ENCODE measurements at regions of chr2 and their contacts with region 1.

Region 1: DNA sequence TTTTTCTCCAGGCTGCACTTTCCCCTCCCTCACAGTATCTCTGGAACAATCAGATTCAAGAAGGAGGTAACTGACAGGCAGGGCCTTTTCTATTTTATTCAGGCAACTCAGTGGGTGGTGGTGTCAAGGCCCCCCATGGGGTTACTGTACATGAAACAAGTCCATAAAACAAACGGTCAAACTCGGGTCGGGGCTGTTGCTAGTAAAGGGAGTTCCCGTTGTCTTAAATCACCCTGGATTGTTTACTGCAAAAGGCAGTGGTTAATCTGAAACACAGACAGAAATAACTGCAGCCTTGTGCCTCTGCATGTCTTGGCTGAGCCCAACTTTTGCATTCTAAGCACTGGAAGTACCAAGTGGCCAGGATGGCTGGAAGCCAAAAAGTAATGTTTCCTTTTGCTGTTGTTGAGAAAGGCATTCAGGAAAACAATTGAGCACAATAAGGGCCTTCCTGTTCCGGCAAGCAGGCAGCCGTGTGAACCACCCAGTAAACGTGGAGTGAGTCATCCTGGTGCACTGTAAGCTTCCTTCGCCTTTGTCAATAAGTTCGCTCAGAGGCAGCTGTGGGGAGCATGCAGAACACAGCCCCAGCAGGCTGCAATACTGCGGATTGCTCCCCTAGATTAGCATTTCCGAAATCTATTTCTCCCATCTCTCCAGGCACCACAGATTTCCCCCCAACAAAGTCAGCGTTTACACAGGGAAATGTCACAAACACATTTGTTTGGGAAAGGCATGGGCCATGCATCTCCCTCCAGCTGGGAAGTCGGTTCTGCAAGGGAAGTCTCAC is 149.6 kb downstream of the IRS1 start:
- DNase-seq: peak; percentile 18 to 91
- H3K4me3 ChIP-seq: no peak overlapping the region
- H3K27ac ChIP-seq: peak overlapping the region; percentile 67 to 82
- H3K4me1 ChIP-seq: peaks cover 15 to 18% of the 10 kb centered on the region in 2 donors
- H3K27me3 ChIP-seq: no peaks in the 10 kb centered on the region
- CTCF ChIP-seq: no peak

Region 2: DNA sequence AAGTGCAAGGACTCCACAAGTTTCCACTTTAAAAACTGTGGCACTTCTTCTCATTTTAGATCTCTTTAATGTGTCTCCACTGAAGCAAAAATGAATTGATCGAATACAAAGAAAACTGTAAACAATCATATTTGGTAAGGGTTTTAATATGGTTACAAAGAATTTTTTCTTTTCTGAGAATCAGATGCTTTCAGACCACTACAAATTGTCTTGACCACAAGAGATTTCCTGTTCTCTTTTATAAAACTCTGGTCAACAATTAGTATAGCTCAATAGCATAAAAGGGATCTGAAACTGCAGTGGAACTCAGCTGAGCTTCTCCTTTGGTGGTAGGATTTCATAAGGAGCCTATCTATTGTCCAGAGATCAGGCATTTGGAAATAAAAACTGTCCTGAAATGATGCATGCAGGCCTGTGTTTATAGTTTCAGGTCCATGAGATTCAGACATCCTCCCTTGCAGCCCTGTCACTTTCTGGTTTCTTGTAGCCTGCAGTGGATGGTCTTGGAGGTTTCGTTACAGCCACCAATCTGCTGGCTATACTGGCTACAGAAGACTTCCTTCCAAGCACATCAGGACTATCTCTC is 1727.8 kb before region 1 on chr2:
- intact Hi-C with region 1: loop called (anchors 10 kb)
- DNase-seq: no peak
- H3K4me3 ChIP-seq: no peak overlapping the region
- H3K27ac ChIP-seq: peak overlapping the region; percentile 90 to 97
- H3K4me1 ChIP-seq: peaks cover 8 to 26% of the 10 kb centered on the region in 2 donors
- H3K27me3 ChIP-seq: no peaks in the 10 kb centered on the region
- CTCF ChIP-seq: no peak

Region 3: GRCh38 chr2:226583715-226584114 is 66.4 kb before region 1 on chr2:
- intact Hi-C with region 1: loop called (anchors 5 kb)
- DNase-seq: no peak
- H3K4me3 ChIP-seq: no peak overlapping the region
- H3K27ac ChIP-seq: no peak overlapping the region
- H3K4me1 ChIP-seq: peaks cover 0 to 5% of the 10 kb centered on the region in 2 donors
- H3K27me3 ChIP-seq: no peaks in the 10 kb centered on the region
- CTCF ChIP-seq: no peak